HEK293 (cell line): ENCODE measurements at regions of chr2 and their contacts with region 1.

Region 1: DNA sequence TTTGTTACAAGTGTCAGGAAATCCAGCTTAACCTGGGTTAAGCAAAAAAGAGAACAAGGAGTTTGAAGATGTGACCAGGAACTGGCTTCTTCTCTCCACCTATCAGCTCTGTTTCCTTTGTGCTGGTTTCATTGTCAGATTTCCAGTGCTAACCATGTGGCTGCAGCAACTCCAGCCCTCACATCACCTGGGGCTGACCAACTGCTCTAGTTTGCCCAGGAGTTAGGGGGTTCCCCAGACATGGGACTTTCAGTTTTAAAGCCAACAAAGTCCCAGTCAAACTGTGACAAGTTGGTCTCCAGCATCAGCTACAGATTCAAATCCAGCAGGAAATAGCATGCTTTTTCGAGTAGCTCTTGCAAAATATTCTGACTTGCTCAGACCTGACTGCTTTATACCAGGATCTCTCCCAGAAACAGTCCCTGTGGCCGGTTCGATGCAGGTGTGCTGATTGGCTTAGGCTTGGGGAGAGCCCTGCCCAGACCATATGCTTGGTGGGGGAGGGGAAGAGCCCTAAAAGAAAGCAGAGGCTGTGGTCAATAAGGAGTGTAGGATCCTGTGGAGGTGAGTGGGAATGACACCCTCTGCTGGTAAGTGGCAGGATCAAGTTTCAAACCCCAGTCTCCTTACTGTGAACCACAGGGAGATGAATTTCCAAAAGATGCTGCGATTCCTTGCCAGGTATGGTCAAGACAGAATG is 49.5 kb downstream of the KCNE4 start:
- H3K4me3 ChIP-seq: no peak overlapping the region
- H3K27ac ChIP-seq: no peak overlapping the region
- H3K4me1 ChIP-seq: no peaks in the 10 kb centered on the region
- CTCF ChIP-seq: peak; percentile 62

Region 2: GRCh38 chr2:221924576-221924975 is 1176.9 kb before region 1 on chr2:
- CTCF ChIA-PET with region 1: no interaction called
- POLR2A ChIA-PET with region 1: no interaction called
- H3K4me3 ChIP-seq: no peak overlapping the region
- H3K27ac ChIP-seq: no peak overlapping the region
- H3K4me1 ChIP-seq: no peaks in the 10 kb centered on the region
- CTCF ChIP-seq: no peak

Region 3: DNA sequence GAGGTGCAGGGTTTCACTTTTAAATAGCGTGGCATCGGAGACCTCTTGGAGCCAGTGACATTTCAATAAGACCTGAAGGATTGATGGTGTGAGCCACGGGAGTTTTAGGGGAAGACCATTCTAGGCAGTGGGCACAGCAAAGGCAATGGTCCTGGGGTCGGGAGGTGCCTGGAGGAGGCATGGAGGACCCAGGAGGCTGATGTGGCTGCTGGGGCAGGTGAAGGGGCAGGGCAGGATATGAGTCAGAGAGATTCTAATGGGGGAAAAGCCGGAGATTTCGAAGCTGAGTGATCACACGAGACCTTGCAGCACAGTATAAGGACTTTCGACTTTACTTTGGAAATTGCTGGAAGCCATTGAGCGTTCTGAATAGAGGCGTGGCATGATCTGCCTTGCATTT is 129.1 kb before region 1 on chr2:
- CTCF ChIA-PET with region 1: interaction called, 37 read pairs
- POLR2A ChIA-PET with region 1: no interaction called
- H3K4me3 ChIP-seq: no peak overlapping the region
- H3K27ac ChIP-seq: no peak overlapping the region
- H3K4me1 ChIP-seq: no peaks in the 10 kb centered on the region
- CTCF ChIP-seq: no peak

Region 4: GRCh38 chr2:222982010-222982908 is 119.2 kb before region 1 on chr2:
- CTCF ChIA-PET with region 1: interaction called, 27 read pairs
- POLR2A ChIA-PET with region 1: no interaction called
- H3K4me3 ChIP-seq: no peak overlapping the region
- H3K27ac ChIP-seq: no peak overlapping the region
- H3K4me1 ChIP-seq: no peaks in the 10 kb centered on the region
- CTCF ChIP-seq: peak; percentile 66

Region 5: DNA sequence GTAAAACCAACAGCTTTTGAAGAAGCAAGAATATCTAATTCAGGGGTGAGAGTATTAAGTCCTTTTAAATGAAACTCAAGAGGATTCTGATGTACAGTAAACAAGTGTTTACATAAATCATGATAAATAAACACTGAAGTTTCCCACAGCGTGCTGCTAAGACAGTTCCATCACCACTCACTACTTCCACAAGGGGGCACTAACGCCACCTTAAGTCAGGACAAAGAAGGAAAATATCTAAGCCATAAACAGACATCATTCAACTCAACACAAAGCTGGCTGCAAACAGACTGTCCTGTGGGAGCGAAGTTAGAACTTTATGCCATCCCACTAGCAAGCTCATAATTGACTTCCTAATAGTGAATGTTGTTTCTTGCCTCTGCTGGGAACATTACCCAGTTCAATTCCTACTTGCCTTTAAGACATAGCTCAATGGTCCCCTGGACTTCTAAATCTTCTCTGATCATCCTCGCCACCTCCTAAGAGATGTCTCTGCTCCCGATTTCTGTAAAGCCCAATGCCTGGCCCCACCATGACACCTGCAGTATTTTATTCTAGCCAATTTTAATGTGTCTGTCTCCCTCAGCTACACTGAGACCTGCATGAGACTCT is 892.2 kb after region 1 on chr2:
- CTCF ChIA-PET with region 1: no interaction called
- POLR2A ChIA-PET with region 1: no interaction called
- H3K4me3 ChIP-seq: no peak overlapping the region
- H3K27ac ChIP-seq: no peak overlapping the region
- H3K4me1 ChIP-seq: no peaks in the 10 kb centered on the region
- CTCF ChIP-seq: peak; percentile 69